ENCODE measurements at regions of chr3 and their contacts with region 1.

Region 1: DNA sequence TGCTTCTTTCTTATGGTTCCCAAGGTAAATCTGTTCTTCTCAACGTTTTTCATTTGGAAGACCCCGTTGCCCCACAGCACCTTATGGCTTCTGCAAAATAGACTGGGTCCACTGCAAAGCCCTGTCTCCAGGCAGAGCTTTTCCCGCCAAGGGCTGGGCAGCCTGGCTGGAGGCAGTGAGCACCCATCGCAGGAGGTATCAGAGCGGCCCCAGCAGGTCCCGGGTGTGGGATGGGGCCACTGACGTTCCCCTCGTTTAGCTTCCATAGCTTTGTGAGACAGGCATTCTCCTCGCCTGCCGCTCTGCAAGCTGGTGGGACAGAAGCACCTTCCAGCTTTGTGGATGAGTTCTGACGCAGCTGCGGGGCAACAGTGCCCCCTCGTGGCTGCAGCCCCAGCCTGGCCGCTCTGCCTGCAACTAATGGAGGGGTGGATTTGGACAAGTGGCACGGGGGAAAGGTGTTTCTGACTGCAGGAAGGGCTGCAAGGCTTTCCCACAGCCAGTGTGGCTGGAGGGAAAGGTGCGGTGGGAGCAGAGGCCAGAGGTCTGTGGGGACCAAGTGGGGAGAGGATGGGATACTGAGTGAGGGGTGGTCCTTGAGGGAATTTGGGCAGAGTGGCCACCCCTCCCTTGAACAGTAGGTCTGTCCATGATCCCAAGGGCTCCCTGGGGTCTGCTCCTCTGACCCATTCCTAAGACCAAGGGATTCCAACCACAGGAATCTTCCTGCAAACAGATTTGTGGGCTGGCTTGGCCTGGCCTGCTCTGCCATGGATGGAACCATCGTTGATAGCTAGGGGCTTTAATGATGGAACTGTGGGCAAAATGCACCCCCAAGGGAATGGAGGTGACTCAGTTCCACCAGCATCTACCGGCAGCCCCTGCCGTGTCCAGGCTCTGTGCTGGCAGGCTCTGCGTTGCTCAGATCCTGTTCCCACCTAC is 99.4 kb downstream of the FBLN2 start:
- DNase-seq: peak; percentile 73
- ATAC-seq: peak; percentile 83
- H3K4me3 ChIP-seq: no peak overlapping the region
- H3K27ac ChIP-seq: no peak overlapping the region
- H3K4me1 ChIP-seq: peaks cover 1% of the 10 kb centered on the region; the same call in 1 of the 2 replicates
- H3K27me3 ChIP-seq: no peaks in the 10 kb centered on the region; the same call in 1 of the 2 replicates
- CTCF ChIP-seq: peak; percentile 99
- POLR2A ChIP-seq: peak; percentile 56; the same call in 1 of the 2 replicates
- RAD21 ChIP-seq: peak; percentile 99

Region 2: DNA sequence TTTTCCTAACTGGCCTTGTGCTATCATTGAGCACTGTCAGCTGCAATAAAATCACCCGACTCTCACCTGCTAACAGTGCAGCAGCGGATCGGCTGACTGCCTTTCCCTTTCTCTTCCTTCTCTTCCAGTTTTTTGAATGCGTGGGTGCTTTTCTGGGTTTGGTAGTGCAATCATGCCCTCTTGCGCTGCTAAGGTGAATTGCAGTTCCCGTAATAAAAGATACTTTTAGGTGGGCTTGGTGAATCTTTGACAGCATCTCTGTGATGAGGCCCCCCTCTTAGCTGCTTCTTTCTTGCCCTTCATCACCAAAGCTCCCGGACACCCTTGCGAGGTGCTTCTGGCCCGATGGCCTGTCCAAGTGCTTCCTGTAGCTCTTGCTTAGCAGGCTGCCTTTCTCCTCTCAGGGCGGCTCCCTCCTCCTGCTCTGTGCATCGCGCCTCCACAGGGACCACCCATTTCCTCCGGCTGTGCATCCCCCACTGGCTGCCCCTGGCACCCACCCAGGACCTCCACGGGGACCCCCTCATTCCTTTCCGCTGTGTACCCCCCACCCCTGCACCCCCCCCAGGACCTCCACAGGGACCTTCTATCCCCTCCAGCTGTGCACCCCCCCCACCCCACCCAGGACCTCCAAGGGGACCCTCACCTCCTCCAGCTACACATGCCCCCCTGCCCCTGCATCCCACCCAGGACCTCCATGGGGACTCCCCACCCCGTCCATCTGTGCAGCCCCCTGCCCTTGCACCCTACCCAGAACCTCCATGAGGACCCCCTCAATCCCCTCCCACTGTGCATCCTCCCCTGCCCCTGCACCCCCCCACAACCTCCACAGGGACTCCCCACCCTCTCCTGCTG is 756.1 kb before region 1 on chr3:
- CTCF ChIA-PET with region 1: no interaction called
- POLR2A ChIA-PET with region 1: no interaction called
- dilution Hi-C with region 1: no loop called
- in situ Hi-C with region 1: no loop called
- intact Hi-C with region 1: no loop called
- DNase-seq: peak; percentile 66
- ATAC-seq: peak; percentile 79
- H3K4me3 ChIP-seq: no peak overlapping the region
- H3K27ac ChIP-seq: no peak overlapping the region
- H3K4me1 ChIP-seq: no peaks in the 10 kb centered on the region
- H3K27me3 ChIP-seq: peaks cover 11% of the 10 kb centered on the region
- CTCF ChIP-seq: peak; percentile 96
- POLR2A ChIP-seq: no peak
- RAD21 ChIP-seq: peak; percentile 97

Region 3: DNA sequence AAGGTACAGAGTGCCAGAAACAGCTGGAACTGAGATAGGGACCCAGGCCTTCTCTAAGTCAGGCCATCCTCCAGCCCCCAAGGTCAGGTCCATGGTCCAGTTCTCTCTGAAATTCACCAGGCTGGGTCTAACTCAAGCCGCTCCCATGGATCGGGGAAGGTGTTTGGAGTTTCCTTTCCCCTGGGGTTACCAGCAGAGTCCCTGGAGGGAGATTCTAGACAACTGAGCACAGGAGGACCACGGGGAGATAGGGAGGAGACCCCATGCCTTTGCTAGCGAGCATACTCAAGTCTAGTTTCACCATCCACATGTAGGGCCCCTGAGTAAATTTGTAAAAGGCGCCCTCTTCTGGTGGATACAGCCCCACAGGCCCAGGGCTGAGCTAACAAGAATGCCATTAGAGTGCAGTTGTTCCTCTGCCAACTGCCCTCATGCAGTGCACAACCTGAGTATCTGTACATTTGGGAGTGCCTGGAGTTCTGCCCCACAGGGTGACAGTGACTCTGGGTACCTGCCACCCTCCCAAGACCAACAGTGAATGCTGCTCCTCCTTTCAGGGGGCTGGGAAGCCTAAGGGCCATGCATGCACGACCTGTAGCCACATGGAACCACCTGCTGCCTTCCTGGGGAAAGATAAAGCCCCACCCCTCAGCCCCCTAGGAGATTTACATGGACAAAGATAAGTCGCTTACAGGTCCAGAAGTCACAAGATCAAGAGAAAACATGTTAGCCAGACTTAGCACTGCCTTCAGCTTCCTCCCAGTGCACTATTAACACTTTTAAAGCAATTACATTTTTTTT is 664.1 kb before region 1 on chr3:
- CTCF ChIA-PET with region 1: no interaction called
- POLR2A ChIA-PET with region 1: no interaction called
- dilution Hi-C with region 1: no loop called
- in situ Hi-C with region 1: no loop called
- intact Hi-C with region 1: loop called (anchors 5 kb)
- DNase-seq: peak; percentile 66
- ATAC-seq: peak; percentile 95
- H3K4me3 ChIP-seq: no peak overlapping the region
- H3K27ac ChIP-seq: no peak overlapping the region
- H3K4me1 ChIP-seq: no peaks in the 10 kb centered on the region
- H3K27me3 ChIP-seq: no peaks in the 10 kb centered on the region
- CTCF ChIP-seq: peak; percentile 81
- POLR2A ChIP-seq: no peak
- RAD21 ChIP-seq: peak; percentile 74

Region 4: GRCh38 chr3:13091898-13092611 is 556.3 kb before region 1 on chr3:
- CTCF ChIA-PET with region 1: interaction called, 3 read pairs
- POLR2A ChIA-PET with region 1: interaction called, 4 read pairs
- dilution Hi-C with region 1: no loop called
- in situ Hi-C with region 1: loop called (anchors 10 kb)
- intact Hi-C with region 1: loop called (anchors 1 kb)
- DNase-seq: peak; percentile 60
- ATAC-seq: peak; percentile 94
- H3K4me3 ChIP-seq: no peak overlapping the region
- H3K27ac ChIP-seq: no peak overlapping the region
- H3K4me1 ChIP-seq: no peaks in the 10 kb centered on the region
- H3K27me3 ChIP-seq: peaks cover 23% of the 10 kb centered on the region; the same call in 1 of the 2 replicates
- CTCF ChIP-seq: peak; percentile 80
- POLR2A ChIP-seq: no peak
- RAD21 ChIP-seq: peak; percentile 83

Region 5: DNA sequence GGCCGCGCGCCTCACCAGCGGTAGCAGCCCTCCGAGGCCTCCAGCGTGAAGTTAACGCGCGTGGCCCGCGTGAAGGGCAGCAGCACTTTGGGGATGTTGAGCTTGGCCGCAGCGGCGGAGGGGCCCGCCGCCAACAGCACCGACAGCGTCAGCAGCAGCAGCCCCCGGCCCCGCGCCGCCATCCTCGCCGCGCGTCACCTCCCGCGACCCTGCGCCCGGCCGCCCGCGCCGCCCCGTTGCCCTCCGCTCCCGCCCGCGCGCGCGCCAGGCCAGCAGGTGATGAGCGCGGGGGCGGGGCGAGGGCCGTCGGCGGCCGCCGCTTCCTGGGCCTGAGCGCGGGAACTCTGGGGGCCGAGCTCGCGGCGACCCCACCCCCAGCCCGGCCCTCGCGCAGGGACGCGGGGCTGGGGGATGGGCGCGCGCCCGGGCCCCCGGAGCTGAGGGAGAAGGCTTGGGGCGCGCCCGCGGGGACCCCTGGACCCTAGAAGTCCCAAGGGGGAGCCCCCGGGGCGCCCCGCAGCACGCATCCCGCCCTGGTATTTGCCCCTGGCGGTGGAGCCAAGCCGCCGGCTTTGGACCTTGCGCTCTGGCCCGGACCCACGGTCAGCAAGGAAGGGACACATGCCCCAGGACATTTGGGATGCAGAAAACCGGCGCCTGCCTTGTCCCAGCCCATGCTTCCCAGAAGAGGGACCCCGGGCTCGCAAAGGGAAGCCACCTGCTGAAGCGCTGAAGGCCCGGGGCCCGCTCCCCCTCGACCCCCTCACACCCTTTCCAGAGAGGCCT is 228.1 kb before region 1 on chr3 and contains the start of gene NUP210:
- CTCF ChIA-PET with region 1: no interaction called
- POLR2A ChIA-PET with region 1: no interaction called
- dilution Hi-C with region 1: no loop called
- in situ Hi-C with region 1: no loop called
- intact Hi-C with region 1: no loop called
- DNase-seq: no peak
- ATAC-seq: no peak
- H3K4me3 ChIP-seq: no peak within 1 kb of the TSS
- H3K27ac ChIP-seq: no peak within 1 kb of the TSS
- H3K4me1 ChIP-seq: no peaks in the 10 kb centered on the region
- H3K27me3 ChIP-seq: peaks cover 51% of the 10 kb centered on the region
- CTCF ChIP-seq: no peak
- POLR2A ChIP-seq: no peak
- RAD21 ChIP-seq: no peak
- total RNA-seq, gene NUP210: under 0.01 TPM in 1 of 2 replicates, not detected in the other

Region 6: GRCh38 chr3:13495921-13496723 is 152.2 kb before region 1 on chr3:
- CTCF ChIA-PET with region 1: interaction called, 86 read pairs
- POLR2A ChIA-PET with region 1: no interaction called
- dilution Hi-C with region 1: no loop called
- in situ Hi-C with region 1: loop called (anchors 5 kb)
- intact Hi-C with region 1: loop called (anchors 1 kb)
- DNase-seq: peak; percentile 79
- ATAC-seq: peak; percentile 95
- H3K4me3 ChIP-seq: no peak overlapping the region
- H3K27ac ChIP-seq: no peak overlapping the region
- H3K4me1 ChIP-seq: 0 out of 2 replicates have a peak, but pooled peaks cover 1% of the 10 kb centered on the region
- H3K27me3 ChIP-seq: no peaks in the 10 kb centered on the region
- CTCF ChIP-seq: peak; percentile 98
- POLR2A ChIP-seq: peak; percentile 60; the same call in 1 of the 2 replicates
- RAD21 ChIP-seq: peak; percentile 100

Region 7: GRCh38 chr3:13574798-13575451 is 73.4 kb before region 1 on chr3:
- CTCF ChIA-PET with region 1: no interaction called
- POLR2A ChIA-PET with region 1: no interaction called
- dilution Hi-C with region 1: no loop called
- in situ Hi-C with region 1: no loop called
- intact Hi-C with region 1: loop called (anchors 10 kb)
- DNase-seq: peak; percentile 18
- ATAC-seq: peak; percentile 28; the same call in 1 of the 2 replicates
- H3K4me3 ChIP-seq: no peak overlapping the region
- H3K27ac ChIP-seq: no peak overlapping the region
- H3K4me1 ChIP-seq: 0 out of 2 replicates have a peak, but pooled peaks cover 1% of the 10 kb centered on the region
- H3K27me3 ChIP-seq: no peaks in the 10 kb centered on the region
- CTCF ChIP-seq: no peak
- POLR2A ChIP-seq: no peak
- RAD21 ChIP-seq: no peak

Region 8: DNA sequence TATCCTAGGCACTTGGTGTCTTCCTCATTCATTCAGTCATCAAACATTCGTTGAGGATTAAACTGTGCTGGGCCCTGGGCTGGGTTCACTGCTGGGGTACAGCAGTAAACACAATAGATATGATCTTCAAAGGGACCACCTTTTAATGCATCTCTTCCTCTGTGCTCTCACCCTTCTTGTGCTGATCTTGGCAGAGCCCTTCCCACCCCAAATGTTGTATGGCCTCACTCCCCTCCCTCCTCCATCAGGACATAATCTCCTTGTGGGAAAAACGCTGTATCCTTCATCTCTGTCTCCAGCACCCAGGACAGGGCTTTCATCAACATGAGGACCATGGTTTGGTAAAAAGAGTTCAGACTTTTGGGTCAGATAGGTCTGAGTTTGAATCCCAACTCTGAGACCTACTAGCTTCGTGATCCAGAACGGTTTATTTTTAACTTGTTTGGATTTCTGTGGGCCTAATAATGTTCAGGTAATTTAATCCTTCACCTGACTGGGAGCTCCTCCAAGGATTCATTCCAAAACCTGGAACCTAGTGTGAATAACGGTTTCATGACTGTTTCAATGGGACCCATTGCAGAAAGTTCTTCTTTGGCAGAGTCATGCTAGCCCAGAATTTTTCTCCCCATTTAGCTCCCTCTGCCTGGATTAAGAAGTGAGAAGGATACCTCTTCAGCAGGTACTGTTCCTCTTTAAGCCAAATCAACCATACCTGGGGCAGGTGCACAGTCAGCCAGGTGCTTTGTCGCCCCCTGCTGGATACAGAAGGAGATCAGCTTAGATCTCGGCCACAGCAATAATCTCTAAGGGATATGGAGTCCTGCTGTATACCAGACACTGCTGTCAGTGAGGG is 236.7 kb after region 1 on chr3:
- CTCF ChIA-PET with region 1: no interaction called
- POLR2A ChIA-PET with region 1: no interaction called
- dilution Hi-C with region 1: no loop called
- in situ Hi-C with region 1: no loop called
- intact Hi-C with region 1: no loop called
- DNase-seq: no peak
- ATAC-seq: no peak
- H3K4me3 ChIP-seq: no peak overlapping the region
- H3K27ac ChIP-seq: no peak overlapping the region
- H3K4me1 ChIP-seq: no peaks in the 10 kb centered on the region
- H3K27me3 ChIP-seq: peaks cover 15% of the 10 kb centered on the region
- CTCF ChIP-seq: 0 out of 2 replicates have a peak, but pooled peaks have one; percentile 20
- POLR2A ChIP-seq: no peak
- RAD21 ChIP-seq: peak; percentile 9; the same call in 1 of the 2 replicates